Heart left ventricle (tissue), 16 donors: ENCODE measurements at regions of chr4 and their contacts with region 1.

Region 1: DNA sequence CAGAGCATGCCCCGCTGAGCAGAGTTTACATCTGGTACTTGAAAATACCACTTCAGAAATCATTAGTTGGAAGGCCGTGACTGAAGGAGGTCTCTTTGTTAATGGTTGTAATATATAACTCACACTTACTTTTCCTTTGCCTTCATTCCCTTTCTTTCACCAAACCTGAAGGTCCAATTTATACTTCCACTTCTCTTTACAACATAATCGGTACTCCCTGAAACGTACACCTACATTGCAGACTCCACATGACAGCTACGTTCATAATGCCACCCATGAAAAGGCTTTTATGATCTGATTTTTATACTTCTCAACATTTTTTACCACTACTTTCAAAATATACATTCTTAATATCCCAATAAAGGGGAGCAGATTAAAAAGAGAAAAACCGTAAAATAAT is 298.7 kb downstream of the C4orf33 start:
- DNase-seq: no peak
- ATAC-seq: no peak
- H3K4me3 ChIP-seq: no peak overlapping the region
- H3K27ac ChIP-seq: no peak overlapping the region
- H3K4me1 ChIP-seq: no peaks in the 10 kb centered on the region
- H3K27me3 ChIP-seq: no peaks in the 10 kb centered on the region
- CTCF ChIP-seq: no peak
- POLR2A ChIP-seq: no peak

Region 2: DNA sequence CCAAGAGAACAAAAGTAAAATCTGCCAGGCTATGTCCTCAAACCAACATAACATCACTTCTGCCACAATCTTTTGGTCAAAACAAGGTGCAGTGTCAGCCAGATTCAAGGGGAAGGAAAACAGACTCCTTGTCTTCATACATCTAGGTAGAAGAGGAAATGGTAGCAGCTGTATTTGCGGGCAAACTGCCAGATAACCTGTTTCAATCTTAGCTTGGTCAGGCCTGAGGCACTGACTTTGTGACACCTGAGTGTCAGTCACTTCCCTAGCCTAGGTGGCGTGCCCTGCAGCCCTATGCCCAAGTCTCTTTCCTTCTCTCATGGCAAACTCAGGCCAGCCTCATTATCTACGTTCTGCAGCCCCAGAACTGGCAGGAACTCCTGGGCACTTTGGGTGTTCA is 731.3 kb before region 1 on chr4:
- intact Hi-C with region 1: no loop called
- DNase-seq: no peak
- ATAC-seq: no peak
- H3K4me3 ChIP-seq: no peak overlapping the region
- H3K27ac ChIP-seq: no peak overlapping the region
- H3K4me1 ChIP-seq: peaks cover 0 to 29% (median 6%) of the 10 kb centered on the region in 12 donors
- H3K27me3 ChIP-seq: no peaks in the 10 kb centered on the region
- CTCF ChIP-seq: no peak
- POLR2A ChIP-seq: no peak

Region 3: DNA sequence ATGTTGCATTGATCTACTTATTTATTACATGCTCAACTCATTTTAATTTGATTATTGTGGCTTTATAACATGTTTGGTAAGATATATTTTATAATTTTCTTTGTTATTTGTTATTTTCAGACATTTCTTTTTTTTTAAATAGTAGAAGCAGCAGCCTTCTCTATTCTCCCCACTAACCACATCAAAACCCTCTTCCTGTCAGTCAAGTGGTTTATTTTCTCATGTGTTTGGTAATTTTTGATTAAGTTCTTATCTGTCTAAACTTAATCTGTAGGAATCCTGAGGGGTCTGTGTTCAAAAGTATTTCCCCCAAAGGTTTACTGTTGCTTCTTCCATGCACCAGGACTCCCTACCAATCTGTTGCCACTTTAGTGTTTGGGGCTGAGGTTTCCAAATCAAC is 433.2 kb before region 1 on chr4:
- intact Hi-C with region 1: no loop called
- DNase-seq: no peak
- ATAC-seq: no peak
- H3K4me3 ChIP-seq: no peak overlapping the region
- H3K27ac ChIP-seq: no peak overlapping the region
- H3K4me1 ChIP-seq: no peaks in the 10 kb centered on the region
- H3K27me3 ChIP-seq: no peaks in the 10 kb centered on the region
- CTCF ChIP-seq: no peak
- POLR2A ChIP-seq: no peak

Region 4: GRCh38 chr4:129246850-129247562 is 147.6 kb before region 1 on chr4:
- intact Hi-C with region 1: no loop called
- DNase-seq: no peak
- ATAC-seq: no peak
- H3K4me3 ChIP-seq: no peak overlapping the region
- H3K27ac ChIP-seq: no peak overlapping the region
- H3K4me1 ChIP-seq: no peaks in the 10 kb centered on the region
- H3K27me3 ChIP-seq: no peaks in the 10 kb centered on the region
- CTCF ChIP-seq: no peak
- POLR2A ChIP-seq: no peak

Region 5: GRCh38 chr4:129377131-129377845 is 17.3 kb before region 1 on chr4:
- intact Hi-C with region 1: loop called in 1 of 10 experiments (anchors 1 kb)
- DNase-seq: no peak
- ATAC-seq: no peak
- H3K4me3 ChIP-seq: no peak overlapping the region
- H3K27ac ChIP-seq: no peak overlapping the region
- H3K4me1 ChIP-seq: no peaks in the 10 kb centered on the region
- H3K27me3 ChIP-seq: peaks cover 0 to 7% (median 0%) of the 10 kb centered on the region in 9 donors
- CTCF ChIP-seq: no peak
- POLR2A ChIP-seq: no peak

Region 6: GRCh38 chr4:130524057-130524456 is 1129.4 kb after region 1 on chr4:
- intact Hi-C with region 1: no loop called
- DNase-seq: no peak
- ATAC-seq: no peak
- H3K4me3 ChIP-seq: no peak overlapping the region
- H3K27ac ChIP-seq: no peak overlapping the region
- H3K4me1 ChIP-seq: no peaks in the 10 kb centered on the region
- H3K27me3 ChIP-seq: no peaks in the 10 kb centered on the region
- CTCF ChIP-seq: no peak
- POLR2A ChIP-seq: no peak